HCT116 (cell line): ENCODE measurements at regions of chr1 and their contacts with region 1.

Region 1: GRCh38 chr1:116881879-116882520 is 27.7 kb upstream of the PTGFRN start:
- DNase-seq: no peak
- ATAC-seq: peak; percentile 59
- H3K4me3 ChIP-seq: no peak overlapping the region
- H3K27ac ChIP-seq: no peak overlapping the region
- H3K4me1 ChIP-seq: peaks cover 19 to 23% of the 10 kb centered on the region in 2 experiments
- H3K27me3 ChIP-seq: no peaks in the 10 kb centered on the region
- CTCF ChIP-seq: peak; percentile 35 to 47 (median 41); a peak in 5 of 6 replicates
- POLR2A ChIP-seq: no peak
- RAD21 ChIP-seq: peak; percentile 51; the same call in 1 of the 2 replicates

Region 2: GRCh38 chr1:116853670-116854402 is 28.2 kb before region 1 on chr1:
- CTCF ChIA-PET with region 1: interaction called, 10 read pairs
- POLR2A ChIA-PET with region 1: no interaction called
- RAD21 ChIA-PET with region 1: no interaction called
- intact Hi-C with region 1: no loop called
- DNase-seq: peak; percentile 42
- ATAC-seq: peak; percentile 94
- H3K4me3 ChIP-seq: peak overlapping the region in 1 of 2 experiments; percentile 16; a peak in 2 of 4 replicates
- H3K27ac ChIP-seq: no peak overlapping the region
- H3K4me1 ChIP-seq: peaks cover 16 to 18% of the 10 kb centered on the region in 2 experiments
- H3K27me3 ChIP-seq: 0 out of 2 replicates have a peak, but pooled peaks cover 3% of the 10 kb centered on the region
- CTCF ChIP-seq: no peak
- POLR2A ChIP-seq: no peak
- RAD21 ChIP-seq: no peak; the same call in 1 of the 2 replicates

Region 3: DNA sequence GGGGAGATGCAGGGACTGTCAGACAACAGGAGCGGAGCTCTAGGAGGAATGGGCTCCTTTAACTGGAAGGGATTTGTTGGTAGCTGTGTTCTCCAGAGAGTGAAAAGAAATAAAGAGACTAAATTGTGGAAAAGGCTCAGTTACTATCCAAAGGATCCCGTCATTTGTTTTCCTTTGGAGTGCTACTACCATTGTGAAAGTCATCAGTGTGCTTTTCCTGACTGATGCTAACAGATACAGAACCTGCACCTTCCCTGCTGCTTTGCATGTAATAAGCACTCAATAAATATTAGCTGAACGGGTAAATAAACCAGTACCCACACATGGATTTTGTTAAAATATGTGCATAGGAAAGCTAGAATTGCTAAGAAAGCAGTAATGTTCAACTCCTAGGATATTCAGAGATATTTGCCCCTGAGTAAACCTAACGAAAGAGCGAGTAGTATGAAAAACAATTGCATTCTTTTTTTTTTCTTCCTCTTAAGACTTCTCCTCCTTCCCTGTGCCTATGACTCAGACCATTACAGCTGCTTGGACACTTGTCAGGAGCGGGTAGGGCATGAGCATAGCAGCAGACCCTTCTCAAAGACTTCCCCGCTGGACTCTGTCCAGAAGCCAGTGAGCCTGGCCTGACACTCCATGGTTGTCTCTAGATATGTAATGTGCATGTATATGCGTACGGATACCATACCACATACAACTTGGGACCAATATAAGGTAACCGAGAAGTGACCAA is 69.4 kb after region 1 on chr1:
- CTCF ChIA-PET with region 1: no interaction called
- POLR2A ChIA-PET with region 1: no interaction called
- RAD21 ChIA-PET with region 1: no interaction called
- intact Hi-C with region 1: no loop called
- DNase-seq: no peak
- ATAC-seq: no peak
- H3K4me3 ChIP-seq: no peak overlapping the region
- H3K27ac ChIP-seq: no peak overlapping the region
- H3K4me1 ChIP-seq: no peaks in the 10 kb centered on the region
- H3K27me3 ChIP-seq: no peaks in the 10 kb centered on the region
- CTCF ChIP-seq: no peak
- POLR2A ChIP-seq: no peak
- RAD21 ChIP-seq: no peak